ENCODE measurements at regions of chr3 and their contacts with region 1.

Region 1: DNA sequence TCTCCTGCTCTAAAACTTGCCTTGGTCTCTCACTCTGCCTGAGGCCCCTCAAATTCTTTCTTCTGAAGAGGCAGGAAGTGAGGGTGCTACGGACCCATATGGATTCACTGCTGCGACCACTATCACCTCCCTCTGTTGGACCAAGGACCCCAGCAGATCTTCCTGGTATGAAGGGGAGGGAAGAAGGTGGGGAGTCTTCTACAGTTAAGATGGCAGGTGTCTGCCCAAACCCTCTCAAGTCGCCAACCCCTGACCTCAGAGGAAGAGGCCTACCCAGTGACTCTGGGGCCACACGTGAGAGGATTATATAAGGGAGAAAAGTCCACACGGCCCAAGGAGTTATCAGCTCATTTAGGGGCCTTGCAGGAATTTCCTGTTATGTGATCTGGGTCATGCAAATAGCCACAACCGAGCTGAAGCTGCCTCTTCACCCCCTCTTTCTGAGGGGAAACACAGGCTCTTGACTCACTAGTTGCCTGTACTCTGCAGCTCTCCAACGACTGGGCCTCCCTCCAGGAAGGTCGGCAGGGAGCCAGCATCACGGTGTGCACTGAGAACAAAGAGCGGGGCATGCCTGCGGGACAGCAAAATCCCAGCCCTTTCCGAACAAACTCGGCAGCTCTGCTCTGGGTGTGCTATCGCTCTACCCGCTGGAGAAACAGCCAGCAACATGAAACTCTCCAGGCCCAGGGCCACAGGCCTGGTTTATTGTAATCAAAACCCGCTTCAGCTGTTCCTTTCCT is 116.0 kb downstream of the XXYLT1 start:
- DNase-seq: peak; percentile 13 to 76
- H3K4me3 ChIP-seq: no peak overlapping the region
- H3K4me3 Mint-ChIP-seq: no peak overlapping the region
- H3K27ac Mint-ChIP-seq: peak overlapping the region; percentile 71
- H3K4me1 ChIP-seq: peaks cover 28% of the 10 kb centered on the region
- H3K4me1 Mint-ChIP-seq: peaks cover 25% of the 10 kb centered on the region
- H3K27me3 ChIP-seq: no peaks in the 10 kb centered on the region
- H3K27me3 Mint-ChIP-seq: no peaks in the 10 kb centered on the region
- CTCF ChIP-seq: no peak

Region 2: GRCh38 chr3:195117978-195118581 is 36.9 kb before region 1 on chr3:
- CTCF ChIA-PET with region 1: no interaction called
- POLR2A ChIA-PET with region 1: no interaction called
- intact Hi-C with region 1: loop called (anchors 5 kb)
- DNase-seq: peak; percentile 53 to 86
- H3K4me3 ChIP-seq: no peak overlapping the region
- H3K4me3 Mint-ChIP-seq: peak overlapping the region; percentile 59
- H3K27ac Mint-ChIP-seq: peak overlapping the region; percentile 94
- H3K4me1 ChIP-seq: peaks cover 32% of the 10 kb centered on the region
- H3K4me1 Mint-ChIP-seq: peaks cover 25% of the 10 kb centered on the region
- H3K27me3 ChIP-seq: no peaks in the 10 kb centered on the region
- H3K27me3 Mint-ChIP-seq: no peaks in the 10 kb centered on the region
- CTCF ChIP-seq: peak in 1 of 2 experiments; percentile 34

Region 3: GRCh38 chr3:196097373-196098154 is 942.6 kb after region 1 on chr3:
- CTCF ChIA-PET with region 1: no interaction called
- POLR2A ChIA-PET with region 1: no interaction called
- intact Hi-C with region 1: no loop called
- DNase-seq: no peak
- H3K4me3 ChIP-seq: no peak overlapping the region
- H3K4me3 Mint-ChIP-seq: no peak overlapping the region
- H3K27ac Mint-ChIP-seq: no peak overlapping the region
- H3K4me1 ChIP-seq: no peaks in the 10 kb centered on the region
- H3K4me1 Mint-ChIP-seq: no peaks in the 10 kb centered on the region
- H3K27me3 ChIP-seq: no peaks in the 10 kb centered on the region
- H3K27me3 Mint-ChIP-seq: no peaks in the 10 kb centered on the region
- CTCF ChIP-seq: no peak

Measured in Caco-2 (cell line).